PC-3 (cell line): ENCODE measurements at regions of chr2 and their contacts with region 1.

Region 1: DNA sequence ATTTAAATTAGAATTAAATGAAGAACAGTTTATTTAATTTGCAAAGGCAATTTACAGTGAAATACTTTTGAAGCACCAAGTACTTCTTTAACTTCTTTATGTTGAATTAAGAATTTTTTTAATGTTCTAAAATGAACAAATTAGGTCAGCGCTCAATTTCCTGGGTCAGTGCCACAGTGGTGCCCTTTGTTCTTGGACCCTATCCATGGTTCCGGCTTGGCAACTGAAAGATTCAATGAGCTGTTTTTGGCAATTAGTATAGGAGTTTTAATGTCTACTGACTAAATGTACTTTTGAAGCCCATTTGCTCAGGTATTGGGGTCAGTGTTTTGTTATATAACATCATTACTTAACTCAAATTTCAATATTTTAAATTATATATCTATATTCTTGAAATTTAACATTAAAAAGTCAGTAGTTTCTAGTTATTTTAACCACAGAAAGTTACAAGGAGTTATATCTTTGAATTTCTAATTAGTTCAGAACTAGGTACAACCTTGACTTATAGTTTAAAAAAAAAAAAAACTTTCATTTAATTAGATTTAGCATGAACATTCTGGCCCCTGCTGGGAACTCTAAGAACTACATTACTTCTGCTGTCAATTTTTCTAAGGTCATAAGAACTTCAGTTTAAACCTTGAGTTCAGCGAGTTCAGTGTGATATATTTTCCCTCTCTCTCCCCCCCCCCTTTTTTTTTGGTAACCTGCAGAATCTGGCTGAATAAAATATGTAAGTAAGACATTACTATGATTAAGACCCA is 7.6 kb upstream of the MSTN start:
- DNase-seq: peak; percentile 82
- ATAC-seq: no peak
- H3K4me3 ChIP-seq: no peak overlapping the region
- H3K27ac ChIP-seq: no peak overlapping the region
- H3K4me1 ChIP-seq: no peaks in the 10 kb centered on the region
- H3K27me3 ChIP-seq: no peaks in the 10 kb centered on the region
- CTCF ChIP-seq: peak; percentile 72

Region 2: GRCh38 chr2:189751080-189751658 is 318.9 kb before region 1 on chr2:
- CTCF ChIA-PET with region 1: no interaction called
- POLR2A ChIA-PET with region 1: no interaction called
- intact Hi-C with region 1: loop called (anchors 1 kb)
- DNase-seq: peak; percentile 67
- ATAC-seq: peak; percentile 73
- H3K4me3 ChIP-seq: no peak overlapping the region
- H3K27ac ChIP-seq: no peak overlapping the region
- H3K4me1 ChIP-seq: no peaks in the 10 kb centered on the region
- H3K27me3 ChIP-seq: no peaks in the 10 kb centered on the region
- CTCF ChIP-seq: peak; percentile 81

Region 3: DNA sequence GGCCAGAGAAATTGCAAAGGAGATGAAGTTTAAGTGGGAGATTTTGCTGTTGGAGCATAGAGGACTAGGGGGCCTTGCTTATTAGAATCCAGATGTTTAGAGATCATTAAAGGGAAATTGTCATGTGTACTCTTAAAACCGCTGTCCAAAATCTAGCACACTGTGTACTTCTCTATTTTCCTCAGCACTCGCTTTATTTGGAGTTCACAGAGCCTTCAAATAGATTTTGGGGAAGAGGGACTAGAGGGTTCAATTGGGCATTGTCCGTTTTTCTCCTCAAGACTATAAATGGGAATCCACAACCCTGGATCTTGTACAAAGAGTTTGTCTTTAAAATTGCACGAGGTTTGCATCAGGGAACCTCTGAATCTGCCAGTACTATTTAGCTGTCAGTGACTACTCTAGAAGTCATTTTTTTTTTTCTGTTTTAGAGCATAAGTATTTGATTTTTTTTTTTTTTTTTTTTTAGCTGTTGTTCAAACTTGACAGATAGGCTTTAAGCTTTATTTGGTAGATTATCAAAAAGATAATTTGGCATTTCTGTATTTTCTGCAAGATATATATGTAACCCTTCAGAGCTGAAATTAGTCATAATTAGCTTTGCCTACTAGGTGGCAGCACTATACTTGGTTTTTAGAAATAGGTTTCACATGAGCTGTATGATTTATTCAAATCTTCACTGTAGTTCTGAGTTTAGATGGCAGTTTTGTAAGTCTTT is 271.6 kb before region 1 on chr2:
- CTCF ChIA-PET with region 1: interaction called, 14 read pairs
- POLR2A ChIA-PET with region 1: no interaction called
- intact Hi-C with region 1: loop called (anchors 1 kb)
- DNase-seq: peak; percentile 62
- ATAC-seq: peak; percentile 80
- H3K4me3 ChIP-seq: no peak overlapping the region
- H3K27ac ChIP-seq: no peak overlapping the region
- H3K4me1 ChIP-seq: peaks cover 9% of the 10 kb centered on the region
- H3K27me3 ChIP-seq: no peaks in the 10 kb centered on the region
- CTCF ChIP-seq: peak; percentile 74

Region 4: DNA sequence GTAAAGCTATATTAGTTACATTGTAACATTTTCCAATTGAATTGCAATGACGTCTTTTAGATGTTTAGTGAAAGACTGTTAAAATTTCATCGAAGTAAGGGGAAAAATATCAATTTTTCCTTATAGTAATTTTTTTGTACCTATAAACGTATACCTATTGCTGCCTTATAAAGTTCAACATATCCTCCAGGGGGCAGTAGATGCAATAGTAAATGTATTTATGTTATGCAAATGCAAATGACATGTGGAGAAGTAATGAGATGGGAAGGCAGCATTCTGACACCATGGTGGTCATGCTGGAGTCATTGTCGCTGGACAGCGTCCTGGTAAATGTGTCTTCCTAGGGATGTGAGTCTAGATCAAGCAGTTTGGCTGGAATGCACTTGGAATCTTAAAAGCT is 46.3 kb before region 1 on chr2:
- CTCF ChIA-PET with region 1: no interaction called
- POLR2A ChIA-PET with region 1: no interaction called
- intact Hi-C with region 1: loop called (anchors 2 kb)
- DNase-seq: peak; percentile 73
- ATAC-seq: peak; percentile 73
- H3K4me3 ChIP-seq: no peak overlapping the region
- H3K27ac ChIP-seq: no peak overlapping the region
- H3K4me1 ChIP-seq: no peaks in the 10 kb centered on the region
- H3K27me3 ChIP-seq: peaks cover 8% of the 10 kb centered on the region; the same call in 1 of the 2 replicates
- CTCF ChIP-seq: peak; percentile 77

Region 5: GRCh38 chr2:190765386-190766173 is 695.5 kb after region 1 on chr2:
- CTCF ChIA-PET with region 1: no interaction called
- POLR2A ChIA-PET with region 1: no interaction called
- intact Hi-C with region 1: no loop called
- DNase-seq: peak; percentile 82
- ATAC-seq: peak; percentile 33
- H3K4me3 ChIP-seq: no peak overlapping the region
- H3K27ac ChIP-seq: no peak overlapping the region
- H3K4me1 ChIP-seq: peaks cover 30% of the 10 kb centered on the region
- H3K27me3 ChIP-seq: no peaks in the 10 kb centered on the region
- CTCF ChIP-seq: no peak